Activated CD8-positive, alpha-beta T cell treated with anti-CD3 and anti-CD28 coated beads, Interleukin-2, amount 10 ng/mL, durations not matched to agents 7 days and 5 days (primary cell): ENCODE measurements at regions of chr1 and their contacts with region 1.

Region 1: DNA sequence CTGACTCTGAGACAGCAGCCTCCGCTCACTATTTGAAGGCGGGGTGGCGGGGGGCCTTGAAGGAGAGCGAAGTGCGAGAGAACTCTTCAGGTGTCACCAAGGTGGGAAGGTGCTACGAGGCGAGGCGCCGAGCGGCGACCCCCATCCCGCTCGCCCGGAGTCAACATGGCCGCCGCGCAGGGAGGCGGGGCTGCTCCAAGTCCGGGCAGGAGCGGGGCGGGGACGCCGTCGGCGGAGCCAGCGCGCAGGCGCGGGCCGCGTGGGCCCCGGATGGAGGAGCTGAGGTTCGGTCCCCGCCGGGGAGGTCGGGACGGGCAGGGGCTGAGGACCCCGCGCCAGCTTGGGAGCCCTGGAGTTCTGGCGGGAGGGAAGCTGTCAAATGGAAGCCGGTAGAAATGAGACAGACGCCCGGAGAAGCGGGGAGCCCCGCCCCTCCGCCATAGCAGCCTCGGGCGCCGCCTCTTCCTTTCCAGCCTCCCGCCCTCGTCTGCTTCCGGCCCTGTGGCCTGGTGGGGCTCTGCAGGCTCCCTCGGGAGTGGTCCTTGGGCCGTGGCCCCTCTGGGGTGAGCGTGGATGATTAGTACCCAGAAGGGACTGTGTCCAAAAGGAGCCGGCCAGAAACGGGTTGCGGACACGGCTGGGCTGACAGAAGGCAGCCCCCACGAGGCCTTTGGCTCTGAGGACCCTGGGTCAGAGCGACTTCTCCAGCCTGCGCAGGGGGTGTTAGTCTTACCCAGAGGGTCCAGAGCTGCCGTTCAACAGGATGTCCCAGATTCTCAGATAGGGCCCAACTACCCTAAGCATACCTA is at the start of gene PIGV:
- DNase-seq: peak; percentile 91
- ATAC-seq: peak; percentile 70
- H3K4me3 Mint-ChIP-seq: peak within 1 kb of the TSS; percentile 84
- H3K27ac Mint-ChIP-seq: peak within 1 kb of the TSS; percentile 100
- H3K4me1 Mint-ChIP-seq: peaks cover 84% of the 10 kb centered on the region
- H3K27me3 Mint-ChIP-seq: no peaks in the 10 kb centered on the region
- total RNA-seq, gene PIGV: 19.9 to 20.3 TPM

Region 2: GRCh38 chr1:26259578-26259977 is 528.3 kb before region 1 on chr1:
- CTCF ChIA-PET with region 1: no interaction called
- POLR2A ChIA-PET with region 1: no interaction called
- DNase-seq: no peak
- ATAC-seq: no peak
- H3K4me3 Mint-ChIP-seq: no peak overlapping the region
- H3K27ac Mint-ChIP-seq: no peak overlapping the region
- H3K4me1 Mint-ChIP-seq: peaks cover 3% of the 10 kb centered on the region
- H3K27me3 Mint-ChIP-seq: no peaks in the 10 kb centered on the region

Region 3: GRCh38 chr1:26593385-26593784 is 194.5 kb before region 1 on chr1:
- CTCF ChIA-PET with region 1: interaction called, 334 read pairs
- POLR2A ChIA-PET with region 1: interaction called, 9 read pairs
- DNase-seq: no peak
- ATAC-seq: no peak
- H3K4me3 Mint-ChIP-seq: no peak overlapping the region
- H3K27ac Mint-ChIP-seq: no peak overlapping the region
- H3K4me1 Mint-ChIP-seq: peaks cover 7% of the 10 kb centered on the region
- H3K27me3 Mint-ChIP-seq: no peaks in the 10 kb centered on the region

Region 4: GRCh38 chr1:26695356-26696118 is 92.4 kb before region 1 on chr1 and contains the start of gene ARID1A:
- CTCF ChIA-PET with region 1: interaction called, 149 read pairs
- POLR2A ChIA-PET with region 1: interaction called, 325 read pairs
- DNase-seq: peak; percentile 96
- ATAC-seq: peak; percentile 61
- H3K4me3 Mint-ChIP-seq: peak within 1 kb of the TSS; percentile 88
- H3K27ac Mint-ChIP-seq: peak within 1 kb of the TSS; percentile 97
- H3K4me1 Mint-ChIP-seq: peaks cover 33% of the 10 kb centered on the region
- H3K27me3 Mint-ChIP-seq: no peaks in the 10 kb centered on the region
- total RNA-seq, gene ARID1A: 122 to 123 TPM

Region 5: GRCh38 chr1:26744075-26744959 is 43.6 kb before region 1 on chr1:
- CTCF ChIA-PET with region 1: interaction called, 17 read pairs
- POLR2A ChIA-PET with region 1: interaction called, 57 read pairs
- DNase-seq: peak; percentile 94
- ATAC-seq: peak; percentile 98
- H3K4me3 Mint-ChIP-seq: peak overlapping the region; percentile 71
- H3K27ac Mint-ChIP-seq: peak overlapping the region; percentile 97
- H3K4me1 Mint-ChIP-seq: peaks cover 83% of the 10 kb centered on the region
- H3K27me3 Mint-ChIP-seq: no peaks in the 10 kb centered on the region

Region 6: DNA sequence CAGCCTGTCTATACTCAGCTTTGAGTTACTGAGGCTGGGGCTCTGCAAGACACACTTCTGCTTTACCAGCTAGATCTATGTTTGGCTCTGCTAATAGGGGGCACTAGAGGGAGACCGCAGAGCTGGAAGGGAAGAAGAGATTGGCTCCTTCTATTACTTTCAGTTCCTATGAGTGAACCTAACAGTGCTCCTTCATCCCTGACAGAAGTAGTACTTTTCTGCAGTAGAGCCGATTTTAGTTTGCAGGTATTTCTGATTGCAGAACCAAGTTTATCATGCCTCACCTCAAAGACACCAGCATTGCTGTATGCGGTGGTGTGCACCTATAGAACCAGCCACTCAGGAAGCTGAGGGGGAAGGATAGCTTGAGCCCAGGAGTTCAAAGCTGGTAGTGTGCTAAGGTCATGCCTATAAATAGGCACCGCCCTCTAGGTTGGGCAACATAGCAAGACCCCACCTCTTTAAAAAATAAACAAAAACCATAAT is 32.9 kb after region 1 on chr1:
- CTCF ChIA-PET with region 1: interaction called, 22 read pairs
- POLR2A ChIA-PET with region 1: interaction called, 8 read pairs
- DNase-seq: peak; percentile 64
- ATAC-seq: peak; percentile 93
- H3K4me3 Mint-ChIP-seq: peak overlapping the region; percentile 70
- H3K27ac Mint-ChIP-seq: peak overlapping the region; percentile 80
- H3K4me1 Mint-ChIP-seq: peaks cover 25% of the 10 kb centered on the region
- H3K27me3 Mint-ChIP-seq: no peaks in the 10 kb centered on the region

Region 7: GRCh38 chr1:26848947-26849774 is 61.3 kb after region 1 on chr1:
- CTCF ChIA-PET with region 1: no interaction called
- POLR2A ChIA-PET with region 1: no interaction called
- DNase-seq: no peak
- ATAC-seq: no peak
- H3K4me3 Mint-ChIP-seq: no peak overlapping the region
- H3K27ac Mint-ChIP-seq: no peak overlapping the region
- H3K4me1 Mint-ChIP-seq: peaks cover 9% of the 10 kb centered on the region
- H3K27me3 Mint-ChIP-seq: no peaks in the 10 kb centered on the region

Region 8: DNA sequence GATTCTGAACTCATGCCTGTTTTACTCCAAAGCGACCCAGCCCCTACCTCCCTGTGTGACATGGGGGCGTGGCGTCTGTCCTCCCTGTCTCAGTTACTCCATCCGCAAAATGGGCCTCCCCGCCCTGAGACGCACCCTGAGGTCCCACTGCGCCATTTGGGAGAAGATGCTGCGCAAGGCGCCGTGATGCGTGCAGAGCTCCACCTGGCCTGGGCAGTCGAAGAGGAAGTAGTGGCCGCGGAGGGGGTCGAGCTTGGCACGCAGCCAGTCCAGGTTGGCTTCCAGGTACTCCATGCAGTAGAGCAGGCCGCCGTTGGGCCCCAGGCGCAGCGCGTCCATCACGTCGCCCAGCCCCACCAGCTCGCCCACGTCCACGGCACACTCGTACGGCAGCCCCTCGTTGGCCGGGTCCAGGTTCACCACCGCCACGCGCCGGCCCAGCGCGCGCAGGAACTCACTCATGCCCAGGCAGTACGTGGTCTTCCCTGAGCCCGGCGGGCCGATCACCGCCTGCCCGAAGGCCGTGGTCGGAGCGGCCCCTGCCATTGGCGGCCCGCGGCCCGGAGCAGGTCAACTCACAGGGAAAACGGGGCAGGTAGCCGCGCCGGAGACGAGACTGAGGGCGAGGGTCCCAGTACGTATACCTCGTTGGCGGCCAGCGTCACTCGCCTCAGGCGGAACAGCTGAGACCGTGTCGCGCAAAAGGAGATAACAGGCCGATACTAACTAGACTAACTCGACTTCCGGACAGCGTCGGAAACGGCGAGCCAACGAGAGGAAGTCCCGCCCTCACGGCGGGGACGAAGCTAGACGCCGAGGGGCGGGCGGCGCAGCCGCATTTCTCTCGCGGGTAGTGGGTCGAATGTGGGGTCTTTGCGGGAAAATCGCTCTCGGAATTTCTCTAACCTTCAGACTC is 101.9 kb after region 1 on chr1 and contains the start of gene GPN2:
- CTCF ChIA-PET with region 1: interaction called, 14 read pairs
- POLR2A ChIA-PET with region 1: interaction called, 13 read pairs
- DNase-seq: peak; percentile 86
- ATAC-seq: peak; percentile 97
- H3K4me3 Mint-ChIP-seq: peak within 1 kb of the TSS; percentile 96
- H3K27ac Mint-ChIP-seq: peak within 1 kb of the TSS; percentile 96
- H3K4me1 Mint-ChIP-seq: peaks cover 32% of the 10 kb centered on the region
- H3K27me3 Mint-ChIP-seq: no peaks in the 10 kb centered on the region
- total RNA-seq, gene GPN2: 28.9 to 32.8 TPM

Region 9: DNA sequence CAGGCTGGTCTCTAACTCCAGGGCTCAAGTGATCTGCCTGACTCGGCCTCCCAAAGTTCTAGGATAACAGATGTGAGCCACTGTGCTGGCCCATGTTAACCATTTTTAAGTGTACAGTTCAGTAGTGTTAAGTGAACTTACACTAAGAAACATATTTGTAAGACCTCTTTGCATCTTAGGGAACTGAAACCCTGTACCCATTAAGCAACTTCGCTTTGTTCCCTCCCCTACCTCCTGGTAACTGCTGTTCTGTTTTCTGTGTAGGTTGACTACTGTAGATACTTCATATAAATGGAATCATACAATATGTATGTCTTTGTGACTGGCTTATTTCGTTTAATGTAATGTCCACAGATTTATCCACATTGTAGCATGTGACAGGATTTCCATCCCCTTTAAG is 144.6 kb after region 1 on chr1:
- CTCF ChIA-PET with region 1: no interaction called
- POLR2A ChIA-PET with region 1: no interaction called
- DNase-seq: no peak
- ATAC-seq: no peak
- H3K4me3 Mint-ChIP-seq: no peak overlapping the region
- H3K27ac Mint-ChIP-seq: no peak overlapping the region
- H3K4me1 Mint-ChIP-seq: peaks cover under 1% of the 10 kb centered on the region
- H3K27me3 Mint-ChIP-seq: no peaks in the 10 kb centered on the region